Naive thymus-derived CD8-positive, alpha-beta T cell (primary cell): ENCODE measurements at regions of chr5 and their contacts with region 1.

Region 1: DNA sequence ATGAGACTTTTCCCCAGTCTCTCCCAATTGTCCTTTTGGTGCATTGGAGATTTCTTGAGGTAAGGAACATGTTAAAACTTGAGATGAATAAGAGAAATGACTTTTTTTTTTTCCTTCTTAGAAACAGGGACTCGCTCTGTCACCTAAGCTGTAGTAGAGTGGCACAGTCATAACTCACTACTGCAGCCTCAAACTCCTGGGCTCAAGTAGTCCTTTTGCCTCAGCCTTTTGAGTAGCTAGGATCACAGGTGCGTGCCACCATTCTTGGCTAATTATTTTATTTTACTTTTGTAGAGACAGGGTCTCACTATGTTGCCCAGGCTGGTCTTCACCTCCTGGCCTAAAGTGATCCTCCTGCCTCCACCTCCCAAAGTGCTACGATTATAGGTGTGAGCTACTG is 25.9 kb downstream of the CDC42SE2 start:
- DNase-seq: no peak
- ATAC-seq: peak; percentile 49 to 50
- H3K4me3 Mint-ChIP-seq: peak overlapping the region; percentile 79 to 91 (median 88)
- H3K27ac Mint-ChIP-seq: peak overlapping the region; percentile 95 to 98 (median 97)
- H3K4me1 Mint-ChIP-seq: peaks cover 24 to 92% (median 68%) of the 10 kb centered on the region in 4 donors
- H3K27me3 Mint-ChIP-seq: no peaks in the 10 kb centered on the region

Region 2: GRCh38 chr5:131270809-131271208 is 18.9 kb before region 1 on chr5:
- POLR2A ChIA-PET with region 1: interaction called, 36 read pairs
- DNase-seq: no peak
- ATAC-seq: no peak
- H3K4me3 Mint-ChIP-seq: peak overlapping the region; percentile 73 to 98 (median 88)
- H3K27ac Mint-ChIP-seq: peak overlapping the region; percentile 91 to 98 (median 94)
- H3K4me1 Mint-ChIP-seq: peaks cover 34 to 86% (median 66%) of the 10 kb centered on the region in 4 donors
- H3K27me3 Mint-ChIP-seq: no peaks in the 10 kb centered on the region

Region 3: GRCh38 chr5:131328536-131329285 is 39.0 kb after region 1 on chr5:
- POLR2A ChIA-PET with region 1: interaction called, 10 read pairs
- DNase-seq: peak in 2 of 10 donors; percentile 28 to 32
- ATAC-seq: peak; percentile 44 to 67
- H3K4me3 Mint-ChIP-seq: peak overlapping the region in 9 of 10 donors; percentile 8 to 62 (median 47)
- H3K27ac Mint-ChIP-seq: peak overlapping the region; percentile 49 to 89 (median 84)
- H3K4me1 Mint-ChIP-seq: peaks cover 31 to 85% (median 72%) of the 10 kb centered on the region in 4 donors
- H3K27me3 Mint-ChIP-seq: no peaks in the 10 kb centered on the region